Right cardiac atrium (tissue), 5 donors: ENCODE measurements at regions of chr10 and their contacts with region 1.

Region 1: DNA sequence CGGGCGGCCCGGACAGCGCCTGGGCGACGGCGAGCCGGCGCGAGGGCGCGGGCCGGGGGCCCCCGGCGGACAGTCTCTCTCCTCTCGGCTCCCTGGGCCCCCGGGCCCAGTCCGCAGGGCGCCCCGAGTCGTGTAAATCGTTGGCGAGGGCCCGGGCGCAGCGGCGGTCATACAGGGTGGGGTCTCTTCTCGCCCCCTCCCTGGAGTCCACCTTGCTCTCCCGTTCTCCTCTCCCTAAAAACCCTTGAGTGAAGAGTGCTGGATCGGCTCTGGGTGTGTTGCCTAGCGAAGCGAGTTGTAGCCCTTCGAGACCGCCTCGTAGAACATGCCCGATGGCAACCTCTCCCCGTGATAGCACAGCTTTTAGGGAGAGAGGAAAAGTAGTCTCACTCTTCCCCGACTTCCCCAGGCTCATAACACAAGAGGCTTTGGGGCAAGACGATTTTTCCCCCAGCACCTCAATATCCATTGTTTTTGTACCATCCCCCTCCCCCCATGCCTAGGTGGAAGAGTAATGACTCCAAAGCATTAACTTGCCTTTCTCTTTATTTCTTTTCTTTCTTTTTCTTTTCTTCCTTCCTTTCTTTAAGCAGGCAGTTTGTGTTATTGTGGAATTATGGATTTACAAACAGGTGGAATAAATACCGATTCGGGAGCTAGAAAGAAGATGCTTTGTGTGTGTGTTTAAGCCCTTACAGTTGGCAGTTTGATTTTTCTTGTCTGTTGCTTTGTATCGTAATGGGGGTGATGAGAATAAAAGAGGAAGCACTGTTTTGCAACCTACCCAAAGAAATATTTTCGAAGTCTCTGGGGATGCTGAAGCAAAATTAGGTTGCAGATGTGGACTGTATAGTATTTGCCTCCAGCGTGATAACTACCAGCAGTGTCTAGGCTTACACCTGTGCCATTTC is 822 bp downstream of the SHOC2 start:
- DNase-seq: peak; percentile 49 to 78 (median 68)
- ATAC-seq: no peak
- H3K4me3 ChIP-seq: peak overlapping the region; percentile 99
- H3K27ac ChIP-seq: peak overlapping the region; percentile 98
- H3K4me1 ChIP-seq: peaks cover 3% of the 10 kb centered on the region
- H3K27me3 ChIP-seq: no peaks in the 10 kb centered on the region

Region 2: GRCh38 chr10:110221721-110222261 is 698.4 kb before region 1 on chr10:
- intact Hi-C with region 1: no loop called
- DNase-seq: peak; percentile 88 to 89 (median 89)
- ATAC-seq: peak; percentile 67 to 74
- H3K4me3 ChIP-seq: peak overlapping the region; percentile 17
- H3K27ac ChIP-seq: peak overlapping the region; percentile 35
- H3K4me1 ChIP-seq: peaks cover 15% of the 10 kb centered on the region
- H3K27me3 ChIP-seq: no peaks in the 10 kb centered on the region

Region 3: DNA sequence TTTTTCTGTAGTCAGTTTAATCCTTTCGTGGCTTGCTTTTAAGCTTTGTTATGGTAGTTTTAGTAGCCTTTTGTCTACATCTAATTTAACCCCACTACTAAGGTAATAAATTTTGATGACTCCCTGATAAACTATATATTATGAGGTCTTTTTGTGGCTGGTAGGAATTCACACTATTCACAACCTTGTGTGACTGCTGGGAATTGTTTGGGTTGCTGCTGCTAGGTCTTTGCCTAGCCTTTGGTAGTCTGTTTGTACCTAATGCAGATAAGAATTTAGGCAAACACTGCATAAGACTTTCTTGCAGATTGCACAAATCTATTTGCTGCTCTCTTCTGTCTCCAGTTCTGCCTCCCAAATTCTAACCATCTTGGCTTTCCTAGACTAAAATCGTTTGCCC is 57.4 kb after region 1 on chr10:
- intact Hi-C with region 1: loop called in 1 of 4 experiments (anchors 10 kb)
- DNase-seq: no peak
- ATAC-seq: peak in 1 of 2 donors; percentile 43
- H3K4me3 ChIP-seq: no peak overlapping the region
- H3K27ac ChIP-seq: no peak overlapping the region
- H3K4me1 ChIP-seq: peaks cover 4% of the 10 kb centered on the region
- H3K27me3 ChIP-seq: no peaks in the 10 kb centered on the region